GM12878 (cell line): ENCODE measurements at regions of chr4 and their contacts with region 1.

Region 1: GRCh38 chr4:171007618-171008390 is 805.4 kb upstream of the GALNTL6 start:
- DNase-seq: no peak
- ATAC-seq: peak; percentile 61
- H3K4me3 ChIP-seq: no peak overlapping the region
- H3K27ac ChIP-seq: no peak overlapping the region
- H3K4me1 ChIP-seq: no peaks in the 10 kb centered on the region
- H3K27me3 ChIP-seq: no peaks in the 10 kb centered on the region
- CTCF ChIP-seq: no peak
- EP300 ChIP-seq: no peak
- POLR2A ChIP-seq: no peak
- RAD21 ChIP-seq: no peak

Region 2: GRCh38 chr4:169428376-169428775 is 1579.4 kb before region 1 on chr4:
- CTCF ChIA-PET with region 1: no interaction called
- POLR2A ChIA-PET with region 1: no interaction called
- RAD21 ChIA-PET with region 1: no interaction called
- SMC1A ChIA-PET with region 1: no interaction called
- in situ Hi-C with region 1: no loop called
- intact Hi-C with region 1: loop called (anchors 10 kb)
- DNase-seq: no peak
- ATAC-seq: no peak
- H3K4me3 ChIP-seq: no peak overlapping the region
- H3K27ac ChIP-seq: no peak overlapping the region
- H3K4me1 ChIP-seq: no peaks in the 10 kb centered on the region
- H3K27me3 ChIP-seq: no peaks in the 10 kb centered on the region
- CTCF ChIP-seq: no peak
- EP300 ChIP-seq: no peak
- POLR2A ChIP-seq: no peak
- RAD21 ChIP-seq: no peak

Region 3: DNA sequence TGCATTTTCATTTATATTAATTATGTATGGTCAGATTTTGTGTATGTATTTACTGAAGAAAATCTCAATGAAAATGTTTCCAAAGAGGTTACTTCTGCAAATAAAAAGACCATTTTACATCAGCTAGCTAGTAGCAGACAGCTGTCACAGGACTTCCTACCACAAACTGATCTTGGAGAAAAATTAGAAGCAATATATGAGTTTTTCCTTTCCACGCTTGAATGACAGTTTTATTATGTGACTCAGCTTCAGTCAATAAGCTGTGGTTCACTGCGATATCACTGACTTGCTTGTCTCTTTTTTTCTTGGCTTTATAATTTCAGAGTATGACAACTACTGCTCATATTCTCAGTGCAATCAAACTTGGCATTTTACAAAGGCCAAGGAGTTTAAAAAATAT is 18.0 kb after region 1 on chr4:
- CTCF ChIA-PET with region 1: no interaction called
- POLR2A ChIA-PET with region 1: no interaction called
- RAD21 ChIA-PET with region 1: no interaction called
- SMC1A ChIA-PET with region 1: no interaction called
- in situ Hi-C with region 1: no loop called
- intact Hi-C with region 1: no loop called
- DNase-seq: no peak
- ATAC-seq: peak; percentile 61
- H3K4me3 ChIP-seq: no peak overlapping the region
- H3K27ac ChIP-seq: no peak overlapping the region
- H3K4me1 ChIP-seq: no peaks in the 10 kb centered on the region
- H3K27me3 ChIP-seq: no peaks in the 10 kb centered on the region
- CTCF ChIP-seq: no peak
- EP300 ChIP-seq: no peak
- POLR2A ChIP-seq: no peak
- RAD21 ChIP-seq: no peak